ENCODE measurements at regions of chr17 and their contacts with region 1.

Region 1: GRCh38 chr17:4199818-4200402 is 56.9 kb downstream of the CYB5D2 start:
- DNase-seq: no peak
- H3K4me3 ChIP-seq: no peak overlapping the region
- H3K27ac ChIP-seq: no peak overlapping the region
- H3K4me1 ChIP-seq: no peaks in the 10 kb centered on the region
- H3K27me3 ChIP-seq: no peaks in the 10 kb centered on the region
- CTCF ChIP-seq: peak; percentile 49 to 77 (median 68)
- EP300 ChIP-seq: no peak
- POLR2A ChIP-seq: no peak
- RAD21 ChIP-seq: peak; percentile 56 to 63

Region 2: GRCh38 chr17:4412933-4413831 is 213.3 kb after region 1 on chr17:
- CTCF ChIA-PET with region 1: interaction called, 11 read pairs
- POLR2A ChIA-PET with region 1: interaction called, 4 read pairs
- DNase-seq: peak; percentile 91 to 99
- H3K4me3 ChIP-seq: no peak overlapping the region
- H3K27ac ChIP-seq: no peak overlapping the region
- H3K4me1 ChIP-seq: peaks cover 0 to 4% (median 2%) of the 10 kb centered on the region in 4 experiments; a peak in 4 of 7 replicates
- H3K27me3 ChIP-seq: no peaks in the 10 kb centered on the region
- CTCF ChIP-seq: peak; percentile 87 to 99 (median 99)
- EP300 ChIP-seq: peak in 1 of 2 experiments; percentile 51; a peak in 1 of 3 replicates
- POLR2A ChIP-seq: no peak
- RAD21 ChIP-seq: peak; percentile 99 to 100

Measured in H1 (cell line).